Activated CD4-positive, alpha-beta memory T cell treated with anti-CD3 and anti-CD28 coated beads for 36 hours (primary cell): ENCODE measurements at regions of chr4 and their contacts with region 1.

Region 1: DNA sequence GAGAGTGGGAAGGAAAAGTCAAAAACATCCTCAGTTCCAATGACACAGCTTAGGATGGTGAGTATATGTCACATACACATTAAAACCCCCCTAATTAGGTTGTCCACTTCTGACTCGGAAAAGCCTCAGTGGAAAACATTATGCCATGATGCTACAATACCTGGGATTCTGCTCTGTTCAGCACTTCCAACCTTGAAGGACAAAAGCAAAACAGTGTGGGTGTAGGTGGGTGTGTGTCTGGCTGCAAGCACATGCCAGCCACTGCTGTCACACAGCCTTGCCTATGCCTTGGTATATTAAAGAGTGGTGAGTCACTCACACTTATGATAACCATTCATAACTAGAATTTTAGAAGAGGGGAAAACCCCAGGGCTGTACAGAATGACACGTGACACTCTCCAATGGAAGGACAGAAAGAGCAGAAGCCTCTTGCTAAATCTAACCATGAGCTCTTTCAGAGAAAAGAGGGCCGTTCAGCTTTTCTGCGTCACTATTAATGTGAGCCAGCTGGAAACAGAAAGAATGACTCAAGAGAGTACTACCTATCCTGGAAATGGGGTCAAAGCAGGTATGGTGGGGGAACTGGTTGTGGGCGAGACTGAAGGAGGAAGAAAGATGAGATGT is 159.6 kb downstream of the TET2 start:
- DNase-seq: peak; percentile 83
- H3K4me3 Mint-ChIP-seq: peak overlapping the region; percentile 30
- H3K27ac Mint-ChIP-seq: peak overlapping the region; percentile 92
- H3K4me1 Mint-ChIP-seq: peaks cover 25% of the 10 kb centered on the region
- H3K27me3 Mint-ChIP-seq: no peaks in the 10 kb centered on the region

Region 2: DNA sequence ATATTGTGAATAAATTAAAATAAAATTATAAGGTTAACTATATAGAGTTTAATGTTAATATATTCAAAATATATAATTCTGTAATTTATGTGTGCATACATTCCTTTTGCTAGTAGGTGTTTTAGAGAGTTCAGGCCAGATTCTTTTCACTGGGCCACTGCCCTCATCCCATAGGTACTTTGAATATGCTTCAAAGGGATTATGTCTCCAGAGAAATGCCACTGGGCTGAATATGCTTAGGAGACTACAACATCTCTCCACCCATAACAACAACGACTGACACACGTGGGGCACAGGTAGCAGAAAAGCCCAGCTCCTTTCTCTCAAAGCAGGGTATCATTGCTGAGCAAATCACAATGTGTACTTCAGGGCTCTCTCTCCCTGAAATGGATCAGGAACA is 1295.5 kb before region 1 on chr4:
- CTCF ChIA-PET with region 1: no interaction called
- POLR2A ChIA-PET with region 1: no interaction called
- intact Hi-C with region 1: no loop called
- DNase-seq: no peak
- H3K4me3 Mint-ChIP-seq: no peak overlapping the region
- H3K27ac Mint-ChIP-seq: no peak overlapping the region
- H3K4me1 Mint-ChIP-seq: no peaks in the 10 kb centered on the region
- H3K27me3 Mint-ChIP-seq: no peaks in the 10 kb centered on the region

Region 3: GRCh38 chr4:104490770-104491480 is 815.3 kb before region 1 on chr4:
- CTCF ChIA-PET with region 1: no interaction called
- POLR2A ChIA-PET with region 1: no interaction called
- intact Hi-C with region 1: no loop called
- DNase-seq: peak; percentile 51
- H3K4me3 Mint-ChIP-seq: peak overlapping the region; percentile 67
- H3K27ac Mint-ChIP-seq: no peak overlapping the region
- H3K4me1 Mint-ChIP-seq: peaks cover 41% of the 10 kb centered on the region
- H3K27me3 Mint-ChIP-seq: peaks cover 52% of the 10 kb centered on the region

Region 4: DNA sequence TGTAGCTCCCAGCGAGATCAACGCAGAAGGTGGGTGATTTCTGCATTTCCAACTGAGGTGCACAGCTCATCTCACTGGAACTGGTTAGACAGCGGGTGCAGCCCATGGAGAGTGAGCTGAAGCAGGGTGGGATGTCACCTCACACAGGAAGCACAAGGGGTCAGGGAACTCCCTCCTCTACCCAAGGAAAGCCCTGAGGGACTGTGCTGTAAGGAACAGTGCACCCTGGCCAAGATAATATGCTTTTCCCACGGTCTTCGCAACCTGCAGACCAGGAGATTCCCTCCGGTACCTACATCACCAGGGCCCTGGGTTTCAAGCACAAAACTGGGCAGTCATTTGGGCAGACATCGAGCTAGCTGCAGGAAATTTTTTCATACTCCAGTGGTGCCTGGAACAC is 376.0 kb before region 1 on chr4:
- CTCF ChIA-PET with region 1: no interaction called
- POLR2A ChIA-PET with region 1: no interaction called
- intact Hi-C with region 1: loop called (anchors 10 kb)
- DNase-seq: no peak
- H3K4me3 Mint-ChIP-seq: no peak overlapping the region
- H3K27ac Mint-ChIP-seq: no peak overlapping the region
- H3K4me1 Mint-ChIP-seq: peaks cover 30% of the 10 kb centered on the region
- H3K27me3 Mint-ChIP-seq: no peaks in the 10 kb centered on the region

Region 5: GRCh38 chr4:105106426-105106825 is 199.8 kb before region 1 on chr4:
- CTCF ChIA-PET with region 1: no interaction called
- POLR2A ChIA-PET with region 1: no interaction called
- intact Hi-C with region 1: no loop called
- DNase-seq: no peak
- H3K4me3 Mint-ChIP-seq: no peak overlapping the region
- H3K27ac Mint-ChIP-seq: no peak overlapping the region
- H3K4me1 Mint-ChIP-seq: no peaks in the 10 kb centered on the region
- H3K27me3 Mint-ChIP-seq: peaks cover 10% of the 10 kb centered on the region

Region 6: GRCh38 chr4:105135785-105136184 is 170.5 kb before region 1 on chr4:
- CTCF ChIA-PET with region 1: interaction called, 4 read pairs
- POLR2A ChIA-PET with region 1: interaction called, 5 read pairs
- intact Hi-C with region 1: loop called (anchors 1 kb)
- DNase-seq: no peak
- H3K4me3 Mint-ChIP-seq: no peak overlapping the region
- H3K27ac Mint-ChIP-seq: no peak overlapping the region
- H3K4me1 Mint-ChIP-seq: peaks cover 28% of the 10 kb centered on the region
- H3K27me3 Mint-ChIP-seq: no peaks in the 10 kb centered on the region

Region 7: GRCh38 chr4:105179539-105180401 is 126.5 kb before region 1 on chr4:
- CTCF ChIA-PET with region 1: no interaction called
- POLR2A ChIA-PET with region 1: no interaction called
- intact Hi-C with region 1: no loop called
- DNase-seq: no peak
- H3K4me3 Mint-ChIP-seq: no peak overlapping the region
- H3K27ac Mint-ChIP-seq: no peak overlapping the region
- H3K4me1 Mint-ChIP-seq: peaks cover 44% of the 10 kb centered on the region
- H3K27me3 Mint-ChIP-seq: no peaks in the 10 kb centered on the region

Region 8: GRCh38 chr4:105215609-105216313 is 90.5 kb before region 1 on chr4:
- CTCF ChIA-PET with region 1: interaction called, 3 read pairs
- POLR2A ChIA-PET with region 1: interaction called, 3 read pairs
- intact Hi-C with region 1: loop called (anchors 1 kb)
- DNase-seq: no peak
- H3K4me3 Mint-ChIP-seq: peak overlapping the region; percentile 14
- H3K27ac Mint-ChIP-seq: peak overlapping the region; percentile 65
- H3K4me1 Mint-ChIP-seq: peaks cover 42% of the 10 kb centered on the region
- H3K27me3 Mint-ChIP-seq: no peaks in the 10 kb centered on the region

Region 9: DNA sequence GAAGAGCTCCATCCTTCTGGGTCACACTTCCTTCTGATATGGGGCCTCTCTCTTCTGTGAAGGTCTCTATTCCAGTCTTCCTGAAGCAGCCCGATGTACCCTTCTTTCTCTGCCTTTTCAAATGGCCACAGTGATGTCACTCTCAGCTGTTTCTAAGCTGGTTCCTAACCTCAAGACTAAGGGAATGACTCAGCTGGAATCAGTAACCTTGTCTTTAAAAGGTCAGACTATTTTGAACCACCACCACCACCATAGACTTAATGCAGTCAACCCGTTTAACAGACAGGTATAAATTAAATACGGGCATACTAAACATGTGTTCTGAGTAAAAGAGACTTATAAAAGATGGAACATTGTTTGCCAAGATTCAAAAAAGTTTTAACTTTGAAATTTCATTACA is 46.6 kb after region 1 on chr4:
- CTCF ChIA-PET with region 1: no interaction called
- POLR2A ChIA-PET with region 1: no interaction called
- intact Hi-C with region 1: loop called (anchors 1 kb)
- DNase-seq: no peak
- H3K4me3 Mint-ChIP-seq: no peak overlapping the region
- H3K27ac Mint-ChIP-seq: no peak overlapping the region
- H3K4me1 Mint-ChIP-seq: peaks cover 19% of the 10 kb centered on the region
- H3K27me3 Mint-ChIP-seq: no peaks in the 10 kb centered on the region